ENCODE measurements at regions of chr10 and their contacts with region 1.

Region 1: GRCh38 chr10:98030031-98030821 is at the start of gene CRTAC1:
- DNase-seq: peak; percentile 36 to 81 (median 53)
- ATAC-seq: peak; percentile 57 to 82 (median 74)
- H3K4me3 ChIP-seq: peak within 1 kb of the TSS; percentile 4 to 47 (median 27)
- H3K27ac ChIP-seq: no peak within 1 kb of the TSS
- H3K4me1 ChIP-seq: peaks cover 0 to 9% (median 9%) of the 10 kb centered on the region in 3 donors
- H3K27me3 ChIP-seq: peaks cover 0 to 27% (median 5%) of the 10 kb centered on the region in 4 donors
- CTCF ChIP-seq: no peak
- total RNA-seq, gene CRTAC1: 0.24 to 1.3 (median 0.55) TPM

Region 2: GRCh38 chr10:97914837-97915211 is 115.4 kb before region 1 on chr10:
- intact Hi-C with region 1: loop called in 1 of 3 experiments (anchors 5 kb)
- DNase-seq: peak; percentile 79 to 94 (median 90)
- ATAC-seq: peak; percentile 92 to 97 (median 96)
- H3K4me3 ChIP-seq: no peak overlapping the region
- H3K27ac ChIP-seq: no peak overlapping the region
- H3K4me1 ChIP-seq: no peaks in the 10 kb centered on the region
- H3K27me3 ChIP-seq: no peaks in the 10 kb centered on the region
- CTCF ChIP-seq: peak; percentile 93 to 97 (median 94)

Region 3: GRCh38 chr10:98107644-98108430 is 77.6 kb after region 1 on chr10:
- intact Hi-C with region 1: no loop called
- DNase-seq: no peak
- ATAC-seq: no peak
- H3K4me3 ChIP-seq: no peak overlapping the region
- H3K27ac ChIP-seq: no peak overlapping the region
- H3K4me1 ChIP-seq: no peaks in the 10 kb centered on the region
- H3K27me3 ChIP-seq: no peaks in the 10 kb centered on the region
- CTCF ChIP-seq: no peak

Region 4: DNA sequence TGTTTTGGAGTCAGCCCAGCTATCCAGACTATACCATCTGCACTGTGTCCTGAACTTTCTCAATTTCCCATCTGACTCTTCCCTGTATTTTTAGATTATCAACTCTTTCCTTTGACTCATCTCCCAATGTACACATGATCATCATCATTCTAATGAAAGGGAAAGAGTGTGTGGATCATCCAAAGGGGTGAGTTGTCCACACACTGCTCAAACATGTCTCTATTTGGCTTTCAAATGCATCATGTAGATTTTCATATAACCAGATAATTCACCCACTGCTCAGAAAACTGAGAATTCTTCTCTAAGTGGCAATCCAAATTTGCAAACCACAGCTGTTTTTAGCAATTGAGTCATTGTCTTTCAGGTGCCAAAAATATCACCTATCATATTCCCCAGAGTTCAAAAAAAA is 606.7 kb after region 1 on chr10:
- intact Hi-C with region 1: no loop called
- DNase-seq: no peak
- ATAC-seq: no peak
- H3K4me3 ChIP-seq: no peak overlapping the region
- H3K27ac ChIP-seq: no peak overlapping the region
- H3K4me1 ChIP-seq: no peaks in the 10 kb centered on the region
- H3K27me3 ChIP-seq: no peaks in the 10 kb centered on the region
- CTCF ChIP-seq: no peak